Sigmoid colon (tissue), 7 donors: ENCODE measurements at regions of chr11 and their contacts with region 1.

Region 1: GRCh38 chr11:118928108-118928870 is 2.6 kb upstream of the BCL9L start:
- DNase-seq: peak; percentile 98
- H3K4me3 ChIP-seq: peak overlapping the region; percentile 82 to 91 (median 84)
- H3K27ac ChIP-seq: peak overlapping the region; percentile 95 to 100 (median 100)
- H3K4me1 ChIP-seq: peaks cover 0 to 55% (median 46%) of the 10 kb centered on the region in 4 donors
- H3K27me3 ChIP-seq: no peaks in the 10 kb centered on the region
- CTCF ChIP-seq: peak; percentile 86 to 99 (median 94)
- EP300 ChIP-seq: peak in 2 of 4 donors; percentile 15 to 78
- POLR2A ChIP-seq: peak in 1 of 2 donors; percentile 35

Region 2: GRCh38 chr11:118610804-118611795 is 317.2 kb before region 1 on chr11:
- intact Hi-C with region 1: loop called (anchors 5 kb)
- DNase-seq: peak; percentile 92
- H3K4me3 ChIP-seq: peak overlapping the region; percentile 34 to 80 (median 73)
- H3K27ac ChIP-seq: peak overlapping the region; percentile 90 to 97 (median 93)
- H3K4me1 ChIP-seq: peaks cover 0 to 53% (median 36%) of the 10 kb centered on the region in 4 donors
- H3K27me3 ChIP-seq: no peaks in the 10 kb centered on the region
- CTCF ChIP-seq: peak; percentile 50 to 87 (median 60)
- EP300 ChIP-seq: no peak
- POLR2A ChIP-seq: no peak

Region 3: DNA sequence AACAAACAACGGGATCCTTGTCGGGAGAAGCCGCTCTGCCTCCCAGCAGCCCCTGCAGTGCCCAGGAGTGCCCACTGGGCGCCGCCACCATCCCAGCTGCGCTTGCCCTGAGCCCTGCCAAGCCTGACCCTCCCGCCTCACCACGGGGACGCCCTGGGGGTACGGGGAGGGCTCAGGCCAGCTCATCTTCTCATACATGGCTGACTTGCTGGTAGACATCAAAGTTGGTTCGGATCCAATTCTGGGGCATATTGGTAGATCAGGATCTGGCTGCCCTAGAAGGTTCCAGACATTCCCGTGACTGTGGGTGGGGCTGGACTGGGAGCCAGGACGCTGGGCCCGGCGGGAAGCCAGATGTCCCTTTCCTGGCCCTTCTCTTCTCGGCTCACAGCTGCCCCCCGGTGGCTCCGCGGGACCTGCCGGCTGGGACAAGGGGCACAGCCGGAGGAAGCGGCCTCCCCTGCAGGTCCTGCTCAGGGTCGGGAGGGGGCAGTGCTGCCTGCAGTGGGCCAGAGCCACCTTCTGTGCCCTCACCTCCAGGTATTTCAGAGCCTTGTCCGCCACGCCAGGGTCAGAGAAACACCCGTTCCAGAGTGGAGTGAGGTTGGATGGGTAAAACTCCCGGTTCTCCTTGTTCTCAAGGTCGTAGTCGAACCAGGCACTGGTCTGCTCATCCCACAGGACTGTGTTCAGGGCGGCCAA is 238.3 kb before region 1 on chr11:
- intact Hi-C with region 1: loop called (anchors 1 kb)
- DNase-seq: peak; percentile 90
- H3K4me3 ChIP-seq: peak overlapping the region; percentile 13 to 50 (median 46)
- H3K27ac ChIP-seq: peak overlapping the region; percentile 73 to 82 (median 76)
- H3K4me1 ChIP-seq: peaks cover 0 to 19% (median 17%) of the 10 kb centered on the region in 4 donors
- H3K27me3 ChIP-seq: no peaks in the 10 kb centered on the region
- CTCF ChIP-seq: peak; percentile 79 to 95 (median 82)
- EP300 ChIP-seq: peak in 1 of 4 donors; percentile 41
- POLR2A ChIP-seq: no peak

Region 4: DNA sequence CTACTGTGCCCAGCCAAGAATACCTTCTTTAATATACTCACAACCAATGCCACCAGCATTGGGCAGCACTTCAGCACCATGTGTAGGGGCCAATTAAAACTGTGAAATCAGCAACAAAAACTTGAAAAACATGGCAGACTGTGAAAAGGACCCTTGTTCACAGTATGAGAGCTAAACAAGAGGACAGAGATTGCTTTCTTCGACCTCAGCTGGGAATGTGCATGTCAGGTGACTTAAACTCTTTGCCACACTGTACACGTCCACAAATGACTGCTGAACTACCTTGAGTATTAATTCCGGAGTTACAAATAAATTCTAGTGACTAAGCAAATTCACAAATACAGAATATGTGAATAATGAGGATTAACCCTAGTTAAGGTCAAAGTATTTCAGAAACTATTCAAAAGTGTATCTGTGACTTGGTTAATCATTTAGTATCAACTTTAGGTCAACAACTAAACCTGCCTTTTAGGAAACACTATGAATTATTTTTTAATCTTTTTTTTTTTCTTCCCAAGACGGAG is 170.4 kb before region 1 on chr11:
- intact Hi-C with region 1: no loop called
- DNase-seq: no peak
- H3K4me3 ChIP-seq: no peak overlapping the region
- H3K27ac ChIP-seq: no peak overlapping the region
- H3K4me1 ChIP-seq: peaks cover 0 to 4% (median 2%) of the 10 kb centered on the region in 4 donors
- H3K27me3 ChIP-seq: no peaks in the 10 kb centered on the region
- CTCF ChIP-seq: no peak
- EP300 ChIP-seq: no peak
- POLR2A ChIP-seq: no peak

Region 5: DNA sequence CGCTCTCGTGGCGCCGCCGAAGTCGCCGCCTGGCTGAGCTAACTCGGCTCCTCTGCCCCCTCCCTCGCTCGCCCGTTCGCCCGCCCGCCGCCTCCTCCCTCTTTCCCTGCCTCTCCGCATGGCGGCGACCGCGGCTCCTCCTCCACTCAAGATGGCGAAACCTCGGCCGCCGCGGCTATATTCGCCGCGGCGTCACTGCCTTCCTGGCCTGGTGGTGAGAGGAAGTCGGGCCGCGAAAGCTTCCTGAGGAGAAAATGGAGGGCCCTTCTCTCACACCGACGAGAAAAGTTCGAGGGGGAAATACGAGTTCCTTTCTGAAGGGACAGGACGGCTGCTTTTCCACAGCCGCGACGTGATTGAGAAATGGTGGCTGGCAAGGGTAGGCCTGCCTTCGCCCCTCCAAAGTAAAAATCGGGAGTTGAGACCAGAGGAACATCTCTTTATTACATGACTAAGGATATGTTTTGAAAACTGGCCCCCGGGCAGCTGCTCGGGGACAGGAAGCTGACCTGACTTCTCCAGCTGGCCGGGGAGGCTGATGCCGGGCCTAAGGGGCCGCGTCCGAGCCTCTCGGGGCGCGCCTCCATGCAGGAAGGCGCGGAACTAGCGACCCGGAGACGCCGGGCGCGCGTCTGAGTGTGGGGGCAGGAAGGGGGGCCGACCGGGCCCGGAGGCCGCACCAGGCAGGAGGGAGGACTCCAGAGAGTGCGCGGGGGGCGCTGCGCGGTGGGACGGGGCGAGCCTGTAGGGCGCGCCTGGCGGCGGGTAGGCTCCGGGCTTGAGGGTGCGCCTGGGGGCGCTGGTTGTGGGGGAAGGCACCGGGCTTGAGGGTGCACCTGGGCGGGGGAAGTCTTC is 137.0 kb before region 1 on chr11 and contains the start of gene DDX6:
- intact Hi-C with region 1: loop called (anchors 2 kb)
- DNase-seq: peak; percentile 96
- H3K4me3 ChIP-seq: peak within 1 kb of the TSS; percentile 66 to 95 (median 90)
- H3K27ac ChIP-seq: peak within 1 kb of the TSS; percentile 97 to 99 (median 98)
- H3K4me1 ChIP-seq: peaks cover 0 to 45% (median 34%) of the 10 kb centered on the region in 4 donors
- H3K27me3 ChIP-seq: no peaks in the 10 kb centered on the region
- CTCF ChIP-seq: peak in 1 of 4 experiments; percentile 37
- EP300 ChIP-seq: no peak
- POLR2A ChIP-seq: peak; percentile 84 to 90
- total RNA-seq, gene DDX6: 97.8 to 137 (median 121) TPM

Region 6: GRCh38 chr11:118870396-118871345 is 57.6 kb before region 1 on chr11:
- intact Hi-C with region 1: loop called (anchors 1 kb)
- DNase-seq: peak; percentile 82
- H3K4me3 ChIP-seq: peak overlapping the region in 2 of 4 donors; percentile 5 to 20
- H3K27ac ChIP-seq: peak overlapping the region; percentile 78 to 84 (median 78)
- H3K4me1 ChIP-seq: peaks cover 0 to 19% (median 19%) of the 10 kb centered on the region in 4 donors
- H3K27me3 ChIP-seq: no peaks in the 10 kb centered on the region
- CTCF ChIP-seq: peak in 2 of 4 experiments; percentile 21 to 43
- EP300 ChIP-seq: no peak
- POLR2A ChIP-seq: no peak

Region 7: GRCh38 chr11:118889781-118890180 is 38.5 kb before region 1 on chr11:
- intact Hi-C with region 1: loop called (anchors 5 kb)
- DNase-seq: no peak
- H3K4me3 ChIP-seq: no peak overlapping the region
- H3K27ac ChIP-seq: peak overlapping the region; percentile 79 to 95 (median 84)
- H3K4me1 ChIP-seq: peaks cover 0 to 61% (median 49%) of the 10 kb centered on the region in 4 donors
- H3K27me3 ChIP-seq: no peaks in the 10 kb centered on the region
- CTCF ChIP-seq: no peak
- EP300 ChIP-seq: no peak
- POLR2A ChIP-seq: no peak

Region 8: DNA sequence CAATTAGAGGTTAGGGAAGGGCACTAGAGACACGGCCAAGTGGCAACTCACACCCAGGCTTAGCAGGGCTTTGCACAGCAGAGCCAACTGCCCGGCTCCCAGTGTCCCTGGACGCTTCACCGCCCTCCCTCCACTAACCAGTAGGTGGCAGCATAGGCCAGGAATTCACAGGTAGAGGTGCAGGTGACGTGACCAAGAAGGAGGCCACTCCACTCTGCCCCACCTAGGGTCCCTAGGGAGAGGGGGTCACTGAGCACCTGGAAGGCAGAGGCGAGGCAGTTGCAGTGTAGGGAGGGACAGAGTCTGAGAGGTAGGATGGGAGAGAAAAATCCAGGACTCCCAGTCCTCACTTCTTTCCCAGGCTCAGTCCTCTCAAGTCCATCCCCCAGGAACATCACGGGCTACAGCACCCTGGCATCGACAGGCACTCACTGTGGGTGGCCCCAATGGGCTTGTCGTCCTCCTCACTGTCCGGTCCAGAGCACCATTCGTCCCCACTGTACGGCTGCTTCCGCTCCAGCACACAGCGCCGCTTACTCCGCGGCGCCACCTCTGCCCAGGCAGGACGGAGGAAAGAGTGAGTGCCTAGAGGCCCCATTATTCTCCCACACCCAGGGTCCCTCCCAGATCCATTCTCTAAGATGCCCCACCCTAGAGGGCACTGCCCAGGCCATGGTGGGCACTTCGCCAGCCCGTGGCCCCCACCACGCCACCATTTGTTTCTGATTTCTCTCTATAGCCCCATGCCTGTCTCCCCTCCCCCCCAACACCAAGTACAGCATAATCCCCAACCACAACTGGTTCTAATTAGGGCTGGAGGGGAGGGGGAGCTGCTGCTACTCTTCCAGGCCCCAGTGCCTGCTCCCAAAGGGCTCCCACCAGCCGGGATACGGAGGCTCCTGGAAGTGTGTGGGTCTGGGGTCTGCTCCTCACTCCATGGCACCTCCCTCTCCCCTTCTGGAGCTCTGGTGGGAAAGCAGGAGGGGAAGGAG is 20.9 kb before region 1 on chr11:
- intact Hi-C with region 1: loop called (anchors 1 kb)
- DNase-seq: peak; percentile 92
- H3K4me3 ChIP-seq: no peak overlapping the region
- H3K27ac ChIP-seq: peak overlapping the region; percentile 95 to 100 (median 100)
- H3K4me1 ChIP-seq: peaks cover 0 to 68% (median 62%) of the 10 kb centered on the region in 4 donors
- H3K27me3 ChIP-seq: no peaks in the 10 kb centered on the region
- CTCF ChIP-seq: peak; percentile 94 to 99 (median 98)
- EP300 ChIP-seq: no peak
- POLR2A ChIP-seq: no peak

Region 9: GRCh38 chr11:119222308-119222707 is 294.0 kb after region 1 on chr11:
- intact Hi-C with region 1: no loop called
- DNase-seq: no peak
- H3K4me3 ChIP-seq: no peak overlapping the region
- H3K27ac ChIP-seq: peak overlapping the region in 3 of 4 donors; percentile 15 to 60 (median 36)
- H3K4me1 ChIP-seq: peaks cover 0 to 15% (median 13%) of the 10 kb centered on the region in 4 donors
- H3K27me3 ChIP-seq: no peaks in the 10 kb centered on the region
- CTCF ChIP-seq: no peak
- EP300 ChIP-seq: no peak
- POLR2A ChIP-seq: no peak